BJ (cell line): ENCODE measurements at regions of chr12 and their contacts with region 1.

Region 1: GRCh38 chr12:54220092-54220557 is 31.3 kb upstream of the SMUG1 start:
- DNase-seq: peak; percentile 32
- H3K4me3 ChIP-seq: no peak overlapping the region
- H3K27me3 ChIP-seq: no peaks in the 10 kb centered on the region; the same call in 1 of the 2 replicates
- CTCF ChIP-seq: peak; percentile 88

Region 2: DNA sequence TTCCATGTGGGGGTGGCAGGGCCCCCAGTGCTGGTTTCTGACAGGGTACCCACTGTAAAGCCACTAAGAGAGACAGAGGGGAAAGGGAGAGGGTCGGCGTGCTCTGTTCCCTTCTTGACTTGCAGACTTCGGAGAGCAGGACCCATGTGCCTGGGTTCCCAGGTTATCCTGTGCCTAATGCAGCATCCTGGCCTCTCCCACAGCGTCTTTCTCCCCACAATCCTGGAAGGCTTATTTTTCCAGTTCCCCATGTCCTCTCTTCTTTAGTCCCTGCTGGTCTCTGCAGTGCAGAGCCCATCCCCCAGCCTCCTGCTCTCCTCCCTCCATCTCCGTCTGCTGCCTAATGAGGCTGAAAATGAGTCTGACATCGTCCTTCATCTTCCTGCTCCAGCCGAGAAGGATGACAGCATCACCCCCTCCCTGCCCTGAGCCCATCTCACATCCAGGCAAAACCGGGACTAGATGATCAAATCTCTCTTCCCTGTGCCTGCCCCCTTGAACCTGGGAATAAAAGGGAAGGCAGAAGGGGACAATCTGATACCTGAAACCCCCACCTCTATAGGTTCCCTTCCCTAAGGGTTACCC is 508.0 kb before region 1 on chr12:
- CTCF ChIA-PET with region 1: no interaction called
- POLR2A ChIA-PET with region 1: no interaction called
- DNase-seq: no peak
- H3K4me3 ChIP-seq: no peak overlapping the region
- H3K27me3 ChIP-seq: peaks cover 4% of the 10 kb centered on the region
- CTCF ChIP-seq: no peak

Region 3: GRCh38 chr12:53938326-53939140 is 281.6 kb before region 1 on chr12 and contains the start of gene HOXC13:
- CTCF ChIA-PET with region 1: no interaction called
- POLR2A ChIA-PET with region 1: no interaction called
- DNase-seq: peak; percentile 70
- H3K4me3 ChIP-seq: peak within 1 kb of the TSS; percentile 44
- H3K27me3 ChIP-seq: peaks cover 73% of the 10 kb centered on the region
- CTCF ChIP-seq: no peak
- polyA plus RNA-seq, gene HOXC13: 1.0 and 1.1 TPM in 2 replicates

Region 4: DNA sequence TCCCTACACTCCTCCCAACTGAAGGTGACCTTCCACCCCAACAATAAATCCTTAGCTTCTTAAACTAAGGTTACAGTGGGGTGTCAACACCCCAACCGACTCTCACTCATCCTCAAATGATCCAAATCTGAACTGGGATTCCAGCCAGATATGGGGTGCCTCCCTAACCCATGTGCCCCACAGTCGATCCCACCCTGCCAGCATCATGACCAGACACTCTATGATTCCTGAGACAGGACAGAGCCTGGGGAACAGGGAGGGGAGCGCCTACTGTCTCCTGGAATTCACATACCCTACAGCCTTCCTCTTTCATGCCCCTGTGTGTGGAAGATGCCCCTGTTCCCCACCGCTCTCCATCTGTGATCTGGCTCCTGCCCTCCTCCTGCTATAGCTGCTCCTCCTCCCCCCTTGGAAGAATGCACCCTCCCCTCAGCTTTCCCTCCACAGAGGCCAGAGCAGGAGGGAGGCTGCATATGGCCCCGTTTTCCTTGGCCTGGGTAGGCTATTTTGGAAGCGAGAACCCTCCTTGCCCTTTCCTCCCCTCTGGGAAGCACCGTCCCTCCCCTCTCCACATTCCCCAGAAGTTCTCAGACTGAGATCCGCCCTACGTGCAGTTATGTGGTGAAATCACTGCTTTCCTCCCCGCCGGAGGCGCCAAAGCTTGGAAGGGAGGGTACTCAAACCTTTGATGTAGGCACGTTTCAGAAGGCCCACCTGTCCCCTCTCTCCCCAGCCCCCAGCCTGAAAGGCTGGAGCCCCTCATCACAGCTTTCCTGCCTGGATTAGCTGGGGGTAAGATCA is 79.3 kb before region 1 on chr12:
- CTCF ChIA-PET with region 1: no interaction called
- POLR2A ChIA-PET with region 1: no interaction called
- DNase-seq: peak; percentile 47
- H3K4me3 ChIP-seq: no peak overlapping the region
- H3K27me3 ChIP-seq: peaks cover 3% of the 10 kb centered on the region
- CTCF ChIP-seq: peak; percentile 20; the same call in 1 of the 2 replicates

Region 5: DNA sequence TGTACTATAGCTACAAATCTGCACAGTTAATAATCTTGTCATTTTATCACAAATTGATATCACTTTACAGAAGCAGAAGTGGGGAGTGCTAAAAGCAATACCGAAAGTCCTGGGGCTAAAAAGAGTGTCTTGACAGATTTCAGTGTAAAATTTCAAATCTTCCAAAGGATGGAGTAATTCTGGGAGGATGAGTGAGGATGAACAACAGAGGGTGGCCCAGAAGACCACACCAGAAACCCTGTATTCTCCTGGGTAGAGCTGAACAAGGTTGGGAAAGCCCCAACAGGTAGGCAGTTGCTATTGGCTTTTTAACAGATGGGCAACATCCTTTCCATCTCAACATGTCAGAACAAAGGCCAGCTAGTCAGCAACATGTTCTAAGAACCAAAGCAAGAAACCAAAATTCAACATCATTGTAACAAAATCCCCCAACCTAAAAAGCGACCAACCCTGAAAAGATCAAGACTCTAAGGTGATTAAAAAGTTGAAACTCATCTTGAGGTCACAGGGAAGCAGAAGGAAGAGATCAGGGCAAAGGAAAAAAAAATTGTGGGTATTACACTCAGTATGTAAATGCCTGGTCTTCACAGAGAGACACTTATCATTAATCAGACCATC is 21.0 kb after region 1 on chr12:
- CTCF ChIA-PET with region 1: interaction called, 14 read pairs
- POLR2A ChIA-PET with region 1: no interaction called
- DNase-seq: no peak
- H3K4me3 ChIP-seq: no peak overlapping the region
- H3K27me3 ChIP-seq: no peaks in the 10 kb centered on the region
- CTCF ChIP-seq: no peak

Region 6: GRCh38 chr12:54285150-54286041 is 65.3 kb after region 1 on chr12:
- CTCF ChIA-PET with region 1: interaction called, 12 read pairs
- POLR2A ChIA-PET with region 1: no interaction called
- DNase-seq: no peak
- H3K4me3 ChIP-seq: no peak overlapping the region
- H3K27me3 ChIP-seq: no peaks in the 10 kb centered on the region
- CTCF ChIP-seq: peak; percentile 41; the same call in 1 of the 2 replicates

Region 7: DNA sequence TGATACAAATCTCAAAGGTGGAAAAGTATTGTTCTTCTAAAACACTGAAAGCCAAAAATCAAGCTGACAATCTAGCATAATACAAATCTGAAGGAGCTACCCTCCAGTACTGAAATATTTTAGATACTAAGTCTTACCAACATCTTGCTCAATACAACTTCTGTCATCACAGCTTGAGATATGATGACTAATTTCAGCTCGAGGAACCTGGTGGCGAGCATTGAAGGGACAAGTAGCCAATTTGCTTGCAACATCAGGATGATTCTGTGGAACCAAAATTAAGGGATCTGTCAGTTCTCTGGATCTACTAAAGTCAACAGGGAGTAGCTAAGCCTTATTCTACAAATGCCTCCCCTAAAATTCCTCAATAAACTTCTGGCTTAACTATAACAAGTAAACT is 242.9 kb after region 1 on chr12:
- CTCF ChIA-PET with region 1: no interaction called
- POLR2A ChIA-PET with region 1: no interaction called
- DNase-seq: peak; percentile 44
- H3K4me3 ChIP-seq: no peak overlapping the region
- H3K27me3 ChIP-seq: peaks cover 16% of the 10 kb centered on the region
- CTCF ChIP-seq: no peak